A673 (cell line): ENCODE measurements at regions of chr10 and their contacts with region 1.

Region 1: GRCh38 chr10:14822879-14823755 is 14.7 kb downstream of the CDNF start:
- DNase-seq: peak; percentile 60
- H3K4me3 ChIP-seq: no peak overlapping the region
- H3K27ac ChIP-seq: no peak overlapping the region
- H3K4me1 ChIP-seq: no peaks in the 10 kb centered on the region
- H3K27me3 ChIP-seq: no peaks in the 10 kb centered on the region
- CTCF ChIP-seq: peak; percentile 71

Region 2: DNA sequence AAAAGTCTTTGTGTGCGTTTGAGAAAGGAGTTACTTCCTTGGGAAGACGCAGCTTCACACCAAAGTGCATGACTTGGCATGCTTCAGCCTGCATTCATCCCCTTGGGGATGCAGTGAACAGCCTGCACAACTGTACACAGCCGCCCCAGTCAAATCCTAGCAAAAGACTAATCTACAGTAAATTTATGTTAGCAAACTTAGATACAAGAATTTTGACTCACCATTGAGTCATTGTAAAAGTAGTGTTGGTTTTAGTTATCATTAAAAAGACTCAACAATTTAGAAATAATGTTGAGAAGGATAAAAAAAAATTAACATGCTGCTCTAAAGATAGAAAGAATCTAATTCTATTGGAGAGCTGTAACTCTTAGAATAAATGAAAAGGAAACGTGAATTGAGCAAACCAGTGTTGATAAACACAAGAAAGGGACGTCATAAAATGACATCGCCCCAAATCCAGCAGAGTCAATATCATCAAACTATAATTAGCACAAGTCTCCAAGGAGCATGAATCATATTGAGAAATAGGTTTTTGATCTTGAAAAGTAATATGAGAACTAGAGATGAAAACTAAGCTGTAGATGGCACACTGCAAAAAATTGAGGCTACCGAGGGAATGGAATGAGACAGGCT is 1735.0 kb before region 1 on chr10:
- CTCF ChIA-PET with region 1: no interaction called
- POLR2A ChIA-PET with region 1: no interaction called
- intact Hi-C with region 1: no loop called
- DNase-seq: no peak
- H3K4me3 ChIP-seq: no peak overlapping the region
- H3K27ac ChIP-seq: no peak overlapping the region
- H3K4me1 ChIP-seq: peaks cover 4% of the 10 kb centered on the region
- H3K27me3 ChIP-seq: no peaks in the 10 kb centered on the region
- CTCF ChIP-seq: no peak

Region 3: DNA sequence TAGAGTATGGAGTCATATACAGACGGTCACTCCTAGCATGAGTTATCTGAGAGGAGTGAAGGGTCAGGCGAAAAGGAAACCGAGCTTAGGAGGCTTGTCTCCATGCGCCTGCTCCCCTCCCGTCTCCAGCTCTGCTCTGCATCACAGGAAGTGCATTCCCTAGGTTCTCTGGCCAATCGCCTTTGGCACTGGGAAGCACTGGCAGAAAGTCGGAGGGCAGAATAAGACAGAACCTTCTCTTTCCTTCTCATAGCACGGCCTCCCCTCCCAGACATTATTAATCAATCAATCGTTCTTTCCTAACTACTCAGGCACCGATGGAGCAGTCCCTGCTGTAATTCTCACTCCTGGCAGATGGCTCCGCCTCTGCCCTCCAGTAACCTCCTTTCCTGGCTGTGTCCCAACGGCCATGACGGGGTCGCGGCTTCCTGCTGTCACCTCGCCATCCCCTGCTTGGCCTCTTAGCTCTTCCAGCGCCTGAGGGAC is 669.5 kb before region 1 on chr10:
- CTCF ChIA-PET with region 1: no interaction called
- POLR2A ChIA-PET with region 1: no interaction called
- intact Hi-C with region 1: no loop called
- DNase-seq: peak; percentile 34
- H3K4me3 ChIP-seq: no peak overlapping the region
- H3K27ac ChIP-seq: no peak overlapping the region
- H3K4me1 ChIP-seq: no peaks in the 10 kb centered on the region
- H3K27me3 ChIP-seq: peaks cover 48% of the 10 kb centered on the region
- CTCF ChIP-seq: no peak

Region 4: DNA sequence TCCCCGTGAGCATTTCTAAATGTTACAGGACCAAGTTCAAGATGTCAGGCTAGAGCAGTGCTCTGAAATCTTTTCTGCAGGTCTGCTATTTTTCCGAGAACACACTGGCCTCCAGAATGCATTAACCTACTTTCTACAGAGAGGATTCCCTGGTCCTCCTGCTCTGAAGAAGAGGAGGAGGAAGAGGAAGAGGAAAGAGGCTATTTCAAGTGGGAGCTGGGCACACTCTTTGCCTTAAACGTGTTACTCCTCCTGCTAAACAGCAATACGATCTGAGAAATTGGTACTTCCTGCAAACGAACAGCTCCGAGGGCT is 649.8 kb before region 1 on chr10:
- CTCF ChIA-PET with region 1: no interaction called
- POLR2A ChIA-PET with region 1: no interaction called
- intact Hi-C with region 1: no loop called
- DNase-seq: no peak
- H3K4me3 ChIP-seq: peak overlapping the region; percentile 33
- H3K27ac ChIP-seq: no peak overlapping the region
- H3K4me1 ChIP-seq: no peaks in the 10 kb centered on the region
- H3K27me3 ChIP-seq: peaks cover 68% of the 10 kb centered on the region
- CTCF ChIP-seq: no peak

Region 5: DNA sequence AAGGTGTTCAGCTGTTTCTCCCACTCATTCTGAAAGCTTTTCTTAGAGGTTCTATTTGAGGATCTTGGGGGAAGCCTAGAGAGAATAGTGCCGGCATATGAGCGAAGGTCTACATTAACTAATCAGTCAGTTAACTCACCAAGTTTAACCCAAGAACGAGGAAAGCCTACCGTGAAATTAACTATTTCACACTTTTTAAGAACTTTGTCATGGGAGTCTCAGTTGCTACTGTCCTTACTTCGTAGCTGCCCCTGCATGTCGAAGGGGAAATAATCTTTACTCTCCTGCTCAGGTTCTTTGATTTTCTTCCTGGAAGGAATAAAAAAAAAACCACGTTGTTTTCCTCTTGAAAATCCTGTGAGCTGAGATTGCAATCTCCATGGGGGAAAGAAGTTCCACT is 607.5 kb before region 1 on chr10:
- CTCF ChIA-PET with region 1: no interaction called
- POLR2A ChIA-PET with region 1: no interaction called
- intact Hi-C with region 1: no loop called
- DNase-seq: no peak
- H3K4me3 ChIP-seq: no peak overlapping the region
- H3K27ac ChIP-seq: no peak overlapping the region
- H3K4me1 ChIP-seq: no peaks in the 10 kb centered on the region
- H3K27me3 ChIP-seq: peaks cover 22% of the 10 kb centered on the region
- CTCF ChIP-seq: no peak

Region 6: GRCh38 chr10:14801723-14802122 is 21.4 kb before region 1 on chr10:
- CTCF ChIA-PET with region 1: interaction called, 16 read pairs
- POLR2A ChIA-PET with region 1: no interaction called
- intact Hi-C with region 1: no loop called
- DNase-seq: no peak
- H3K4me3 ChIP-seq: no peak overlapping the region
- H3K27ac ChIP-seq: no peak overlapping the region
- H3K4me1 ChIP-seq: no peaks in the 10 kb centered on the region
- H3K27me3 ChIP-seq: peaks cover 32% of the 10 kb centered on the region
- CTCF ChIP-seq: 0 out of 2 replicates have a peak, but pooled peaks have one; percentile 10